ENCODE measurements at regions of chr17 and their contacts with region 1.

Region 1: DNA sequence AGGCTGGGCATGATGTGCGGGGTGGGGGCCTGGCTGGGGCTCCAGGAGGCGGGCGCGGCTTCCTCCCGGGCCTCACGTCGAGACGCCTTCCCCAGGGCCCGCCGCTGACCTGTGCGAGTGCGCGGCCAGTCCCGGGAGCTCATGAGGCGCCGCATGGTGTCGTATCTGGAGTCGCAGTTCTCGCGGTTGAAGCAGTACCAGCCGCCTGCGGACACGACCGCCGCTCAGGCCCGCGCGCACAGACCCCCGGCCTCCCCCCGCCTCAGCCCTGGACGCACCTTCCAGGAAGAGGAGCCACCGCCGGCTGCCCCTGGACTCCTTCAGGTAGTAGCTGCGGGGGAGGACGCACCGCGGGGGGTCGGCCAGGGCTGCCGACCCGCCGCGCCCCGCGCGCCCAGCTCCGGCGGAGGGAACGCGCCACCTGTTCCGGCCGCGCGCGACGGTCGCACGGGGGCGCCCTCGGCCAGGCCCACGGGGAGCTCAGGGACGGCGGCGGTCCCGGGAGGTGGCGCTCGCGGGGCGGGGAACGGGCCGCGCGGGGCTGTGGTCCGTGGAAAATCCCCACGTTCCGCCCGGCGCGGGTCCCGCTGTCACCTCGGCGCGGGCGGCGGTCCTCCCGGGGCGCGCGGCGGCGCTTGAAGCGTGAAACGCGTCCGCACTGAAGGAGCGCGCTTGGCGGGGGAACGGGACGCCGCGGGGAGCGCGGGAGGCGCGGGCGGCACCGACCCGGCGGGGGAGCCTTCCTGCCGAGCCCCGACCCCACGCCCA is 1.4 kb downstream of the NOTUM start:
- DNase-seq: peak; percentile 85
- ATAC-seq: peak; percentile 78

Region 2: DNA sequence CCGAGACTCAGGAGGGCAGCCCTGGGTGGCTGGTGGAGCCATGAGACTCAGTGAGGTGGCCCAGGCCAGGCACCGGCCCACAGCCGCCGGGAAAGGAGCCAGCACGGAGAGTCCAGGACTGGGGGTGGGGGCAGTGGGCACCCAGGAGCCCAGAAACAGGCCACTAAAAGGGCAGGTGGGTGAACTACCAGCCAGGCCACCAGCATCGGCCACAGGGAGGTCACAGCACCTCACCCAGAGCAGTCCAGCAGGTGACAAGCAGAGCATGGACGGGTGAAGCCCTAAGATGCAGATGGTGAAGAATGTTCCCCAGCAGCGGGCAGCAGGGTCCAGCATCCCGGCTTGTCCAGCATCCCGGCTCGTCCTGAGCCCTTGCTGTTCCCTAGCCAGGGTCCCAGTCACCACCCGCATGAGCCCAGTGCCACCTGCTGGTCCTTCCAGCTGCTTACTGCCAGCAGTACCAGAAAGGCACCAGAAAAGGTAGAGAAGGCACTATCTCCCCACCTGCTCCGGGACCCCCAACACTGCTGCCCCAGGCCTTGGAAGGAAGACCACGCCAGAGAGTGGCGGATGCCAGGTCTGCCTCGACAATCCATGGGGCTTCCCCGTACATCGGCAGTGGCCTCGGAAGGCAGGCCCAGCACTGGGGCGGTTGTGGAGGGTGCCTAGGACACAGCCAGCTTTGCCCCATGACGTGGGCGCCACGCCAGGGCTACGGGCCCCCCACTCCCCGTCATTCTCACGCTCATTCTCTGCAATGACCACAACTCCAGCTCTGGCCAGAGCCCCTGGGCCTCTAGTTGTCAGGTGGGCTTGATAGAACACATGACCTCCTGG is 61.6 kb after region 1 on chr17:
- intact Hi-C with region 1: loop called (anchors 1 kb)
- DNase-seq: peak; percentile 85
- ATAC-seq: peak; percentile 28

Measured in sciatic nerve (tissue), 2 donors.